ENCODE measurements at regions of chr7 and their contacts with region 1.

Region 1: DNA sequence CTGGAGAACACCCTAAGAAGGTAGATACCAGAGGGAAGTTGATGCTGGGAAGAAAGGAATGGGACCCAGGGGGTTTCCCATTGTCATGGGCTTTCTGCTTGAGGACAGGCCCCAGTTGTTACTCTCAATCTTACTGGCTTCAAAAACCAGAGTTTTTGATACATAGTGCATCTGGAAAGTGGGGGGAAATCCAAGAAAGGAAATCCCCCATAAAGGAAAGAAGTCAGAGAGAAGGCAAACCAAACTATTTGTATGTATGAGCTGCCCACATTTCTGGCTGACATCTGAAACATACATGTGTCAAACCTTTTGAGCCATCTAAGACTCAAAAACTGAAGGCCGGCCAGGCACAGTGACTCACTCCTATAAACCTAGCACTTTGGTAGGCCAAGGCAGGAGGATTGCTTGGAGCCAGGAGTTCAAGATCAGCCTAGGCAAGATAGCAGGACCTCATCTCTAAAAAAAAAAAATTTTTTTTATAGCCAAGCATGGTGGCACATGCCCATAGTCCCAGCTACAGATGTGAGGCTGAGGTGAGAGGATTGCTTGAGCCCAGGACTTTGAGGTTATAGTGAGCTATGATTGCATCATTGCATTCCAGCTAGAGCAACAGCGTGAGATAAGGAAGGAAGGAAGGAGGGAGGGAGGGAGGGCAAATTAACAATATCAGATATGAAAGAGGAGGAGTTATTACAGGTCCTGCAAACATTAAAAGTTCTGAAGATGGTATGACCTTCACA is 6.6 kb upstream of the COA1 start:
- DNase-seq: peak; percentile 90
- ATAC-seq: peak; percentile 90
- H3K4me3 ChIP-seq: no peak overlapping the region
- H3K27ac ChIP-seq: peak overlapping the region; percentile 58
- H3K4me1 ChIP-seq: peaks cover 31% of the 10 kb centered on the region
- H3K27me3 ChIP-seq: no peaks in the 10 kb centered on the region
- CTCF ChIP-seq: no peak
- EP300 ChIP-seq: peak; percentile 67 to 81; a peak in 3 of 4 replicates
- POLR2A ChIP-seq: no peak
- RAD21 ChIP-seq: 0 out of 2 replicates have a peak, but pooled peaks have one; percentile 1

Region 2: GRCh38 chr7:43750016-43750887 is 14.3 kb after region 1 on chr7:
- CTCF ChIA-PET with region 1: interaction called, 6 read pairs
- POLR2A ChIA-PET with region 1: interaction called, 14 read pairs
- RAD21 ChIA-PET with region 1: interaction called, 15 read pairs
- SMC1A ChIA-PET with region 1: interaction called, 10 read pairs
- in situ Hi-C with region 1: no loop called
- intact Hi-C with region 1: loop called (anchors 1 kb)
- DNase-seq: no peak
- ATAC-seq: peak; percentile 47
- H3K4me3 ChIP-seq: no peak overlapping the region
- H3K27ac ChIP-seq: peak overlapping the region; percentile 53; the same call in 1 of the 2 replicates
- H3K4me1 ChIP-seq: peaks cover 18% of the 10 kb centered on the region
- H3K27me3 ChIP-seq: no peaks in the 10 kb centered on the region
- CTCF ChIP-seq: no peak
- EP300 ChIP-seq: no peak
- POLR2A ChIP-seq: no peak
- RAD21 ChIP-seq: no peak

Region 3: DNA sequence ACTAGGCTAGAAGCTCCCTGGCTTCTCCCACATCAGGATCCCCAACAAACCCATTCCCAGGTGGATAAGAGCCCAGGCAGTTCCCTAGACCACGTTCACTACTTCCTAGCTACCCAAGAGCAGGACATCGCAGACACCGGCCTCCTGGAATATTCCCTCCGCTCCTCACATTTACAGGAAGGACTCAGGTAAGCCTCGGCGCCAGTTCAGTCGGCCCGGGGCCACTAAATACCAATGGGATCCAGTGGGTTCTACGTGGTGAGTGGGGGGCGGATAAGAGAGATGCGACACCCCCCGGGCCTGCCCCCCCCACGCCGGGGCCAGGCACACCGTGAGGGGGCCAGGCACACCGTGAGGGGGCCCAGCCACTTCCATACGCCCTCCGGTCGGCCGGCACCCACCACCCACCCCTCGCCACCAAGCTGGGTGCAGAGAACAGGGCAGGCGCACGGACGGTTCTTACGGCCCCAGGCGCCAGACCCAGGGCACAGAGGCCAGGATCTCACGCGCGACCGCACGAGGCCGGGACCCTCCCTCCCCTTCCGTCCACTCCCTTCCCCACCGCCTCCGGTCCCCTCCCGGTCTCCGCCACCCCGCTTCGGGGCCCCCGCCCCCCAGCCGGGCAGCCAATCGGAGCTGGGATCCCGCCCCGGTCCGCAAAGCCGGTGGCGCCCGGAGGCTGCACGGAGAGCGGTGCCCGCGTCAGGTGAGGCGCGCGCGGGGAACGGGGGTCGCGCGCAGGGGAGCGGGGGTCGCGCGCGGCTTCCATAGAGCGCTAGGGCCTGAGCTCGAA is 22.3 kb after region 1 on chr7 and contains the start of gene BLVRA:
- CTCF ChIA-PET with region 1: interaction called, 16 read pairs
- POLR2A ChIA-PET with region 1: interaction called, 19 read pairs
- RAD21 ChIA-PET with region 1: interaction called, 49 read pairs
- SMC1A ChIA-PET with region 1: interaction called, 84 read pairs
- in situ Hi-C with region 1: no loop called
- intact Hi-C with region 1: no loop called
- DNase-seq: no peak
- ATAC-seq: peak; percentile 82
- H3K4me3 ChIP-seq: peak within 1 kb of the TSS; percentile 87
- H3K27ac ChIP-seq: peak within 1 kb of the TSS; percentile 73
- H3K4me1 ChIP-seq: peaks cover 38% of the 10 kb centered on the region
- H3K27me3 ChIP-seq: no peaks in the 10 kb centered on the region
- CTCF ChIP-seq: no peak
- EP300 ChIP-seq: no peak
- POLR2A ChIP-seq: peak; percentile 70
- RAD21 ChIP-seq: no peak
- polyA plus RNA-seq, gene BLVRA: 187 to 198 TPM

Region 4: DNA sequence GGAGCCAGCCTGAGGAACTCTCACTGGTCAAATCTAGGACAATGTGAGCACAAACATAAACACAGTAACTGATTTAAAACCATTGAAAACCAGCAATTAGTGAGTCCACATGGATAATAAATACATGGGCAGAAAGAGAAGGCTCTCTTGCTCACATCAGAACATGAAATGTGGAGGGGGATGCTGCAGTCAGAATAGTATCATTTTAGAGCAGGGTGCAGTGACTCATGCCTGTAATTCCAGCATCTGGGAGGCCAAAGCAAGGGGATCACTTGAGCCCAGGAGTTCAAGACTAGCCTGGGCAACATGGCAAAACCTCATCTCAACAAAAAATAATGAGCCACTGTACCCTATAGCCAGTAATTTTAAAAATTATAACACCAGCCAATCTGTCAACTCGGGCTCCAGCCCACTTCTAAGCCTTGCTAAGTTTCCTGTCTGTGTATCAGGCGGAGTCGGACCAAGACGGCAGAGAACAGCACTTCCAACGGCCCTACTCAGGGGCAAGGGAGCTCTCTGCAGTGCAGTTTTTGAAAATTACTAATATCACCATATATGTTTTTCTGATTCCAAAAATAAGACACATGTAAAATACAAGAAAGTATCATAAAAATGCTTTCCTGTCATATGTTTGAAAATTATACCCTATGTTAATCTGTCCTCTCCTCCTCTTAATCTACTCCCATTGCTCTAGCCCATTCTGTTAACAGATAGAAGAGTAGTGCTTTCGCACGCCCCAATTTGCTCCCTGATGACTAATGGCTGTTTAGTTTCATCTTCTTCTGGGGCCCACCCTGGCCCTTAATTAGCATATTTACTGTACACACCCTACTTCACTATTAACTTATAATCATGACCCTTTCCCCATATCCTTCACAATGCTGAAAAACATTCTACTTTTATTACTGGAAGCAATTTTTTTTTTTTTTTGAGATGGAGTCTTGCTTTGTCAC is 153.3 kb after region 1 on chr7:
- CTCF ChIA-PET with region 1: no interaction called
- POLR2A ChIA-PET with region 1: no interaction called
- RAD21 ChIA-PET with region 1: no interaction called
- SMC1A ChIA-PET with region 1: no interaction called
- in situ Hi-C with region 1: no loop called
- intact Hi-C with region 1: no loop called
- DNase-seq: no peak
- ATAC-seq: no peak; the same call in 2 of the 3 replicates
- H3K4me3 ChIP-seq: no peak overlapping the region
- H3K27ac ChIP-seq: no peak overlapping the region
- H3K4me1 ChIP-seq: no peaks in the 10 kb centered on the region
- H3K27me3 ChIP-seq: no peaks in the 10 kb centered on the region
- CTCF ChIP-seq: no peak
- EP300 ChIP-seq: no peak
- POLR2A ChIP-seq: no peak
- RAD21 ChIP-seq: no peak

Region 5: GRCh38 chr7:44431091-44431608 is 695.2 kb after region 1 on chr7:
- CTCF ChIA-PET with region 1: no interaction called
- POLR2A ChIA-PET with region 1: no interaction called
- RAD21 ChIA-PET with region 1: no interaction called
- SMC1A ChIA-PET with region 1: no interaction called
- in situ Hi-C with region 1: no loop called
- intact Hi-C with region 1: no loop called
- DNase-seq: no peak
- ATAC-seq: peak; percentile 91
- H3K4me3 ChIP-seq: no peak overlapping the region
- H3K27ac ChIP-seq: no peak overlapping the region
- H3K4me1 ChIP-seq: peaks cover 6% of the 10 kb centered on the region
- H3K27me3 ChIP-seq: no peaks in the 10 kb centered on the region
- CTCF ChIP-seq: peak; percentile 51 to 56 (median 55)
- EP300 ChIP-seq: no peak
- POLR2A ChIP-seq: no peak
- RAD21 ChIP-seq: peak; percentile 68

Region 6: DNA sequence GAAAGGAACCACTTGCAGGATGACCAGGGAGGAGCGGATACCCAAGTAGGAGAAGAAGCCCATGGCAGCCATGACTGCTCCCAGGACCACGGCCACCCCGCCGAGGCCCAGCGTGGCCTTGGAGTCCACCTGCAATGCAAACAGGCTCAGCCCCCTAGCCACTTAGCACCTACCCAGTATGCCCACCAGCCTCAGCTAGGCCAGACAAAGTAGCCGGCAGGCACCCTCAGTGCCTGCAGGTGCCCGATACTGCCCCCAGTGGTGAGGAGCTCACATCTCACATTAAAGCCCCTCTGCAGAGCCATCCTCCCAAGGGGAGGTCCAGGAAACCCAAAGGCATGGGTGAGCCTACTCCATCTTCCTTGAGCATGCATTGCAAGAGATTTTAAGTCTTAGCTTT is 798.5 kb after region 1 on chr7:
- CTCF ChIA-PET with region 1: no interaction called
- POLR2A ChIA-PET with region 1: no interaction called
- RAD21 ChIA-PET with region 1: no interaction called
- SMC1A ChIA-PET with region 1: no interaction called
- in situ Hi-C with region 1: no loop called
- intact Hi-C with region 1: no loop called
- DNase-seq: no peak
- ATAC-seq: peak; percentile 94
- H3K4me3 ChIP-seq: no peak overlapping the region
- H3K27ac ChIP-seq: no peak overlapping the region
- H3K4me1 ChIP-seq: no peaks in the 10 kb centered on the region
- H3K27me3 ChIP-seq: no peaks in the 10 kb centered on the region
- CTCF ChIP-seq: peak; percentile 61 to 89 (median 78)
- EP300 ChIP-seq: no peak
- POLR2A ChIP-seq: no peak
- RAD21 ChIP-seq: peak; percentile 43